ENCODE measurements at regions of chr17 and their contacts with region 1.

Region 1: DNA sequence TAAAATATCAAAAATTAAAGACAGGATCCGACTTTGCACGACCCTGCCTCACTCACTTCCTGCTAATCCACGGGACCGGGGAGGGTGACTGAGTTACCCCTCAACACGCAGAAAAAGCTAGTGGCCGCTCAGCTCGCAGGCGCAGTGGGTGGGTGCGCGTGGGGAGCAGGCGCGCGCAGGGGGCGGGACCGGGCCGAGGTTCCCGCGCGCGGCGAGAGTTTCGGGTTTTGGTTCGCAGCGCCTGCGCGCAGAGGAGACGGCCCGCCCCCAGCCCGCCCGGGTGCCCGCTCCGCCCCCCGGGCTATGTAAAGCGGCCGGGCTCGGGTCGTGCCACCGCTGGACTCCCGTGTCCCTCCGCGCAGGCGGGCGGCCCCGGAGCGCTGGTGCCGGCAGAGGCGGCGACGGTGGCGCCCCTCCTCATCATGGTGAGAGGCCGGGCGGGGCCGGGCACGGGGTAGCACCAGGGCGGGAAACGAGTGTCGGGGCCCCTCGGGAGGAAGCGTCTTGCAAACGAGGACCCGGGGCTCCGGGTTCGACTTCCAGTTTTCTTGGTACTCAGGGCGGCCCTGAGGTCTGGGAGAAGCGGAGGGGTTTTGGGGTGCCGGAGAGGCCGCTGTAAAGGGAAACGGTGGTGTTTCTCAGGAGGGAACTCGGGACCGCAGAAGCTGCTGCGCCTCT is at the start of gene CNP:
- DNase-seq: peak; percentile 93
- ATAC-seq: peak; percentile 83
- H3K4me3 Mint-ChIP-seq: peak within 1 kb of the TSS; percentile 82
- H3K27ac Mint-ChIP-seq: peak within 1 kb of the TSS; percentile 87
- H3K4me1 Mint-ChIP-seq: peaks cover 38% of the 10 kb centered on the region
- H3K27me3 Mint-ChIP-seq: no peaks in the 10 kb centered on the region
- total RNA-seq, gene CNP: 98.1 to 112 TPM

Region 2: GRCh38 chr17:41930009-41930832 is 36.4 kb before region 1 on chr17 and contains the start of gene ODAD4:
- CTCF ChIA-PET with region 1: interaction called, 17 read pairs
- DNase-seq: peak; percentile 98
- ATAC-seq: peak; percentile 99
- H3K4me3 Mint-ChIP-seq: peak within 1 kb of the TSS; percentile 96
- H3K27ac Mint-ChIP-seq: peak within 1 kb of the TSS; percentile 95
- H3K4me1 Mint-ChIP-seq: peaks cover 62% of the 10 kb centered on the region
- H3K27me3 Mint-ChIP-seq: no peaks in the 10 kb centered on the region
- total RNA-seq, gene ODAD4: 0.49 to 1.1 TPM

Region 3: DNA sequence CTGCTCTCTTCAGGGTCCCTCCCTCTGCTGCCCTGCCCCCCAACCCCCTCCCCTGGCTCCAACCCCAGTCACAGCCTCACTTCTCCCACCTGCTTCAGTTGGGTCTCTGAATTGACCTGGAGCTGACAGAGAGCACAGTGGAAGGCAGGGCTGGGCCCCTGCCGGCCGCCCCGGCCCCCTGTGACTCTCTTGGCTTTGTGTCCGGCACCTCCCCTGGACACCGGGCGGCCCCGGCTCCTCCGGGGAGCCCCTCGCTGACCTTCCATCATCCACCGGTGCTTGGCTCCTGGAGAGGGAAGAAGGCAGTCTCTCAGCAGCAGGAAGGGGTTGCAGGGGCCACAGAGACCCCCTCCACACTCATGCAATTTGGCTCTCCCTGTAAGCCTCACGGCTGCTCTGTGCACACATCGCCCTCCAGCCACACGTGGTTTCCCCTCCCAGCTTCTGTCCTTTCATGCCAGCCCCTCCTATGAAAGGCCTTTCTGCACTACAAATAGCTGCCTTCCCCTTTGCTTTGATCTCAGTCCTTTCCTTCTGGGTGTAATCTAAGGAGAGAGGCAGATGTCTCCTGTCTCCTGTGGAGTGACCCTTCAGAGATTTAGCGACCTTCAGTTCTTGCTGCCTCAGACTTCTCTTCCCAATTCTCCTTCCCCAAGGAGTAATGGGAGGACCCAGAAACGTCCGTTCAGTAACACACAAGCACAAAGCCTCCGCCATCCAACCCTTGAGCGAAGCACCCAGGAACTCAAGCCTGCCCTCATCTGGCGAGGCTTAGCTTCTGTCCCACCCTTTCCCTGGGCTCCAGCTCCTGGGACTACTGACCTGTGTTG is 61.6 kb after region 1 on chr17:
- CTCF ChIA-PET with region 1: interaction called, 16 read pairs
- DNase-seq: no peak
- ATAC-seq: no peak
- H3K4me3 Mint-ChIP-seq: no peak overlapping the region
- H3K27ac Mint-ChIP-seq: no peak overlapping the region
- H3K4me1 Mint-ChIP-seq: peaks cover 4% of the 10 kb centered on the region
- H3K27me3 Mint-ChIP-seq: peaks cover 4% of the 10 kb centered on the region

Region 4: DNA sequence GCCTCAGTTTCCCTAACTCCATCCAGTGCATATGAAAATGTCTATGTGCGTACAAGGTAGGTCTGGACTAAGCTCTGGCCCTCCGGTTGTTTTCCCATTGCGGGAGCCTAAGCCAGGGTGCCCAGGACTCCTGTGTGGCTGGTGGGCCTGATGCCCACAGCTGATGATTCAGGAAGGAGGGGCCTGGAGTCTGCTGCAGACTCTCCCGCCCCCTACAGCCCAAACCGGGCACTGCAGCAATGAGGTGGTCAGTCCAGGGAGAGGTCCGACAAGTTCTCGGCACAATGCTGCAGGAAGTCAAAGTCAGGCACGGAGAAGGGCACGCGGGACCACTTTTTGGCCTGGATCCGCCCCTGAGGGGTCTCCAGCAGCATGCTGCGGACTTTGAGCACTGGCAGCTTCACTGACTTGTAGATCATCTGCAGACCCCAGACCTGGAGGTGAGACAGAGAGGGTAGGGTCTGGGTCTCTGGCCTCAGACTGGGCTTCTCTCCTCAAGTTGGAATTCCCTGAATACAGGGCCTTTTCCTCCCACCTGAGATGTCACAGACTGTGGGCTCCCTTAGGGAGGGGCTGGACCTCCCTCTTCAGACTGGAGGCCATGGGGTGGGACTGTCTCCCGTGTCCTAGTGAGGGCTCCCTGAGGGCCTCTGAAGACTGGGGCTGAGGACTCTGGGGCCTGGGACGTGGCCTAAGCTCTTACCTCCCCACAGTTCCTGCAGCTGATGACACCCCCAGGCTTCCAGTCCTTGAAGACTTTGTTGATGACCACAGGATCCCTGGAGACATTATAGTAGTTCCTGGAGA is 135.1 kb after region 1 on chr17:
- CTCF ChIA-PET with region 1: interaction called, 21 read pairs
- DNase-seq: peak; percentile 80
- ATAC-seq: peak; percentile 64
- H3K4me3 Mint-ChIP-seq: no peak overlapping the region
- H3K27ac Mint-ChIP-seq: no peak overlapping the region
- H3K4me1 Mint-ChIP-seq: peaks cover 8% of the 10 kb centered on the region
- H3K27me3 Mint-ChIP-seq: peaks cover 15% of the 10 kb centered on the region

Region 5: GRCh38 chr17:42120770-42121769 is 154.5 kb after region 1 on chr17 and contains the start of gene KAT2A:
- CTCF ChIA-PET with region 1: interaction called, 30 read pairs
- DNase-seq: peak; percentile 84
- ATAC-seq: peak; percentile 93
- H3K4me3 Mint-ChIP-seq: peak within 1 kb of the TSS; percentile 67
- H3K27ac Mint-ChIP-seq: peak within 1 kb of the TSS; percentile 69
- H3K4me1 Mint-ChIP-seq: peaks cover 34% of the 10 kb centered on the region
- H3K27me3 Mint-ChIP-seq: no peaks in the 10 kb centered on the region
- total RNA-seq, gene KAT2A: 49.0 to 58.2 TPM

Region 6: GRCh38 chr17:42183741-42184711 is 217.4 kb after region 1 on chr17:
- CTCF ChIA-PET with region 1: interaction called, 11 read pairs
- DNase-seq: peak; percentile 85
- ATAC-seq: peak; percentile 80
- H3K4me3 Mint-ChIP-seq: peak overlapping the region; percentile 98
- H3K27ac Mint-ChIP-seq: peak overlapping the region; percentile 79
- H3K4me1 Mint-ChIP-seq: peaks cover 40% of the 10 kb centered on the region
- H3K27me3 Mint-ChIP-seq: peaks cover 31% of the 10 kb centered on the region